ENCODE measurements at regions of chr1 and their contacts with region 1.

Region 1: DNA sequence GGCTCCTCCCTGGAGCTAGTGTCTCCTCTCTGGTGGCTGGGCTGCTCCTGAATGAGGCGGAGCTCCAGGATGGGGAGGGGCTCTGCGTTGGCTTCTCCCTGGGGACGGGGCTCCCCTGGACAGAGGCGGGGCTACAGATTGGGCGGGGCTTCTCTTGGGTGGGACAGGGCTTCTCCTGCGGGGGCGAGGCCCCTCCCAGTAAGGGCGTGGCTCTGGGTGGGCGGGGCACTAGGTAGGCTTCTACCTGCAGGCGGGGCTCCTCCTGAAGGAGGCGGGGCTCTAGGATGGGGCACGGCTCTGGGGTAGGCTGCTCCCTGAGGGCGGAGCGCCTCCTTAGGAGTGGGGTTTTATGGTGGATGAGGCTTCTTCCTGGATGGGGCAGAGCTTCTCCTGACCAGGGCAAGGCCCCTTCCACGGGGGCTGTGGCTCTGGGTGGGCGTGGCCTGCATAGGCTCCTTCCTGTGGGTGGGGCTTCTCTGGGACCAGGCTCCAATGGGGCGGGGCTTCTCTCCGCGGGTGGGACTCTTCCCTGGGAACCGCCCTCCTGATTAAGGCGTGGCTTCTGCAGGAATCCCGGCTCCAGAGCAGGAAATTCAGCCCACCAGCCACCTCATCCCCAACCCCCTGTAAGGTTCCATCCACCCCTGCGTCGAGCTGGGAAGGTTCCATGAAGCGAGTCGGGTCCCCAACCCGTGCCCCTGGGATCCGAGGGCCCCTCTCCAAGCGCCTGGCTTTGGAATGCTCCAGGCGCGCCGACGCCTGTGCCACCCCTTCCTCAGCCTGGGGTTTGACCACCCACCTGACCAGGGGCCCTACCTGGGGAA is 22.7 kb upstream of the ARF1 start:
- DNase-seq: peak; percentile 62 to 83 (median 66)
- H3K4me3 ChIP-seq: peak overlapping the region; percentile 36 to 55
- H3K4me3 Mint-ChIP-seq: peak overlapping the region; percentile 64 to 79 (median 76)
- H3K27ac ChIP-seq: no peak overlapping the region
- H3K27ac Mint-ChIP-seq: peak overlapping the region in 6 of 7 donors; percentile 37 to 77 (median 71)
- H3K4me1 ChIP-seq: peaks cover 24% of the 10 kb centered on the region
- H3K4me1 Mint-ChIP-seq: peaks cover 5 to 18% (median 12%) of the 10 kb centered on the region in 4 donors
- H3K27me3 ChIP-seq: peaks cover 16% of the 10 kb centered on the region
- H3K27me3 Mint-ChIP-seq: peaks cover 10 to 23% of the 10 kb centered on the region in 2 donors

Region 2: GRCh38 chr1:228073857-228074545 is 14.2 kb after region 1 on chr1:
- CTCF ChIA-PET with region 1: no interaction called
- POLR2A ChIA-PET with region 1: interaction called, 7 read pairs
- intact Hi-C with region 1: loop called (anchors 2 kb)
- DNase-seq: no peak
- H3K4me3 ChIP-seq: no peak overlapping the region
- H3K4me3 Mint-ChIP-seq: peak overlapping the region in 1 of 8 donors; percentile 38
- H3K27ac ChIP-seq: no peak overlapping the region
- H3K27ac Mint-ChIP-seq: peak overlapping the region in 3 of 7 donors; percentile 31 to 72 (median 43)
- H3K4me1 ChIP-seq: no peaks in the 10 kb centered on the region
- H3K4me1 Mint-ChIP-seq: peaks cover 0 to 9% (median 3%) of the 10 kb centered on the region in 4 donors
- H3K27me3 ChIP-seq: no peaks in the 10 kb centered on the region
- H3K27me3 Mint-ChIP-seq: no peaks in the 10 kb centered on the region